ENCODE measurements at regions of chr12 and their contacts with region 1.

Region 1: DNA sequence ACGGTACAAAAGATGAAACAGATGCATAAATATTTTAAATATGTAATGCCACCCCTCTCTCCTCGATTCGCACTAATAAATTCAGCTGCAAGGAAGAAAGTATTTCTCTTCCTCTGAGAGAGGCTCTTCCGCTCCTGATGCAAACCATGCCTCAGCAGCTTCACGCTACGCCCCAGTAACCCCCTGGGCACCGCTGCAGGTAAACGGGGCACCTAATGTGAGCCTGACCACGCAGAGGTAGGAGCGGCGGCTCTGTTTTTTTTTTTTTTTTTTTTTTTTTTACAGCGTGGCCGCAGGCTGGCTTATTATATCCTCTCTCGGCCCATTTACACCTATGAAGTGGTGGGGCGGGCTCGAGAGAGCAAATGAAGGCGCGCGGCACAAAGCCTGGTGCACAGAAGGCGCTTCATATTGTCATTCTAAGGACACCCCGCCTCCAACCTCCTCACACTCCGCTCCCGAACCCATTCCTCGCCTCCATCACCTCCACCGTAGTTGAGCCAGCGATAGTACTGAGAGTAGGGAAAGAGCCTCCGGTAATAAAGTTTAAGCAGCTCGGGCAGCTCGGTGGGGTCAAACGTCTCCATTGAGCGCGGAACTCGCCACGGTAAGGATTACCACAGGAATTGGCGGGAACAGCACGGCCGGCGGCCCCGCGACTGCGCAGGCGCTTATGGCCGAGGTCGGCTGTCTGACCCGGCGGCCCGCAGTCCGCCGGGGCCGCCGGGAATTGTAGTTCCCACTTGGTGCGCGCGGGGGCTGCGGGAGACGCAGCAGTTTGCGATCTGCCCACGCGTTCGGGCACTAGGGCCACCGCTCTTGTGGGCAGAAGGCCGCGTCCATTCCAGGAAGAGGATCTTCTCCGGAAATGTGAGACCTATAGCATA is at the start of gene PRIM1:
- DNase-seq: peak; percentile 52 to 87 (median 74)
- ATAC-seq: peak; percentile 87 to 90 (median 88)
- H3K4me3 ChIP-seq: peak within 1 kb of the TSS; percentile 91 to 92
- H3K4me3 Mint-ChIP-seq: peak within 1 kb of the TSS; percentile 95 to 96 (median 96)
- H3K27ac ChIP-seq: peak within 1 kb of the TSS; percentile 72
- H3K27ac Mint-ChIP-seq: peak within 1 kb of the TSS; percentile 89 to 95
- H3K4me1 ChIP-seq: peaks cover 11 to 16% of the 10 kb centered on the region in 2 experiments
- H3K4me1 Mint-ChIP-seq: peaks cover 32 to 38% (median 38%) of the 10 kb centered on the region in 3 donors
- H3K27me3 ChIP-seq: no peaks in the 10 kb centered on the region
- H3K27me3 Mint-ChIP-seq: no peaks in the 10 kb centered on the region
- total RNA-seq, gene PRIM1: 17.3 to 25.2 (median 22.2) TPM

Region 2: GRCh38 chr12:56616925-56617324 is 135.0 kb before region 1 on chr12:
- CTCF ChIA-PET with region 1: interaction called in 1 of 2 experiments, 10 read pairs
- POLR2A ChIA-PET with region 1: no interaction called
- DNase-seq: no peak
- ATAC-seq: no peak
- H3K4me3 ChIP-seq: no peak overlapping the region
- H3K4me3 Mint-ChIP-seq: no peak overlapping the region
- H3K27ac ChIP-seq: no peak overlapping the region
- H3K27ac Mint-ChIP-seq: peak overlapping the region; percentile 22 to 42
- H3K4me1 ChIP-seq: no peaks in the 10 kb centered on the region
- H3K4me1 Mint-ChIP-seq: peaks cover 27 to 33% (median 32%) of the 10 kb centered on the region in 3 donors
- H3K27me3 ChIP-seq: no peaks in the 10 kb centered on the region
- H3K27me3 Mint-ChIP-seq: no peaks in the 10 kb centered on the region

Region 3: GRCh38 chr12:56803750-56804149 is 51.8 kb after region 1 on chr12:
- CTCF ChIA-PET with region 1: no interaction called
- POLR2A ChIA-PET with region 1: no interaction called
- DNase-seq: no peak
- ATAC-seq: no peak
- H3K4me3 ChIP-seq: no peak overlapping the region
- H3K4me3 Mint-ChIP-seq: no peak overlapping the region
- H3K27ac ChIP-seq: no peak overlapping the region
- H3K27ac Mint-ChIP-seq: no peak overlapping the region
- H3K4me1 ChIP-seq: no peaks in the 10 kb centered on the region
- H3K4me1 Mint-ChIP-seq: no peaks in the 10 kb centered on the region
- H3K27me3 ChIP-seq: peaks cover 0 to 9% of the 10 kb centered on the region in 2 experiments
- H3K27me3 Mint-ChIP-seq: no peaks in the 10 kb centered on the region

Region 4: DNA sequence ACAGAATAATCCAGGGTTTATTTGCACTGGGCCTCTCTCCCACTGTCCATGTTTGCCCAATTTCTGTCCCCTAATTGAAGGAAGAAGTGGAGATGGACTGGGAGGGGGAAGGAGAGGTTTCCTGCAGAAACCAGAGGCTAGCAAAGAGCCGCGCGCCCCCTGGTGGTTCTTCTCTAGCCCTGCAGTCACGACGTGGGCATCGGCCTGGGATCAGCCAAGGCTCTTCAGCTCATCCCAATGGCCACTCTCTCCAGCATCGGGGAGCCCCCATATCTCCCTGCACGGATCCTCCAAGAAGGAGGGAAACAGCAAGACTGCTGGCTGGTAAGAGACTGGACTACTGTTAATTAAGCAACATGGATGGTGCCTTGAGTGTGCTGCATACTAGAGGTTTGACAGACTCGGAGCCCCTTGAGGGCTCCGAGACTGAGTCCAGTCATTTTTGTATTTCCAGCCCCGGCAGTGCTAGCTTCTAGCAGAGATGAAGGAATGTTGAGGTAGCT is 235.6 kb after region 1 on chr12:
- CTCF ChIA-PET with region 1: interaction called, 11 to 13 read pairs
- POLR2A ChIA-PET with region 1: interaction called in 1 of 2 experiments, 3 read pairs
- DNase-seq: peak in 34 of 35 experiments; percentile 41 to 83 (median 66)
- ATAC-seq: peak; percentile 78 to 80 (median 80)
- H3K4me3 ChIP-seq: no peak overlapping the region
- H3K4me3 Mint-ChIP-seq: peak overlapping the region in 1 of 3 donors; percentile 46
- H3K27ac ChIP-seq: no peak overlapping the region
- H3K27ac Mint-ChIP-seq: no peak overlapping the region
- H3K4me1 ChIP-seq: peaks cover 0 to 14% of the 10 kb centered on the region in 2 experiments
- H3K4me1 Mint-ChIP-seq: peaks cover 9 to 15% (median 15%) of the 10 kb centered on the region in 3 donors
- H3K27me3 ChIP-seq: no peaks in the 10 kb centered on the region
- H3K27me3 Mint-ChIP-seq: no peaks in the 10 kb centered on the region

Region 5: GRCh38 chr12:57005980-57006808 is 254.2 kb after region 1 on chr12 and contains the start of gene ZBTB39:
- CTCF ChIA-PET with region 1: interaction called, 8 to 21 read pairs
- POLR2A ChIA-PET with region 1: no interaction called
- DNase-seq: peak; percentile 16 to 85 (median 58)
- ATAC-seq: peak; percentile 81 to 89 (median 88)
- H3K4me3 ChIP-seq: peak within 1 kb of the TSS; percentile 60 to 70
- H3K4me3 Mint-ChIP-seq: peak within 1 kb of the TSS; percentile 92 to 95 (median 93)
- H3K27ac ChIP-seq: peak within 1 kb of the TSS; percentile 60
- H3K27ac Mint-ChIP-seq: peak within 1 kb of the TSS; percentile 95 to 96
- H3K4me1 ChIP-seq: peaks cover 33 to 48% of the 10 kb centered on the region in 2 experiments
- H3K4me1 Mint-ChIP-seq: peaks cover 63 to 86% (median 76%) of the 10 kb centered on the region in 3 donors
- H3K27me3 ChIP-seq: no peaks in the 10 kb centered on the region
- H3K27me3 Mint-ChIP-seq: no peaks in the 10 kb centered on the region
- total RNA-seq, gene ZBTB39: 7.9 to 11.2 (median 11.0) TPM

Region 6: DNA sequence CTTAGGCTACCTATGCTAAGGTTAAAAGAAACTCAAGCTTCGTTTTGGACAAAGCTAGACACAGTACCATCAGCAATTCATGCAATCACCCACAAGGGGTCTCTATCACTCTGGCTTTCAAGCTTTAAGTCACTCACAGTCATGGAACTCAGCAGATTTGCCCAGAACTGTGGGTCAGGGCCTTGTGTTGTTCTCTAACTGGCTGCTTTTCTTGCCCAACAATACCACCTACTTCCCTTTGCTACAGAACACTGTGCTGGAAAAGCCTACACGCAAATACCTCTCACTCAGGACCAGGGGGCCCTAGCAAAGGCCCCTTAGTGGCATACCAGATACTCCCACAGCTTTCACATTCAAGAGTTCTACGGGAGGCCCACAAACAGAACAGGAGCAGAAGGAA is 317.6 kb after region 1 on chr12:
- CTCF ChIA-PET with region 1: interaction called, 3 to 11 read pairs
- POLR2A ChIA-PET with region 1: no interaction called
- DNase-seq: peak in 30 of 35 experiments; percentile 30 to 88 (median 55)
- ATAC-seq: peak; percentile 98 to 100 (median 99)
- H3K4me3 ChIP-seq: no peak overlapping the region
- H3K4me3 Mint-ChIP-seq: peak overlapping the region in 1 of 3 donors; percentile 6
- H3K27ac ChIP-seq: peak overlapping the region; percentile 54
- H3K27ac Mint-ChIP-seq: peak overlapping the region; percentile 85 to 92
- H3K4me1 ChIP-seq: peaks cover 5 to 12% of the 10 kb centered on the region in 2 experiments
- H3K4me1 Mint-ChIP-seq: peaks cover 17 to 31% (median 26%) of the 10 kb centered on the region in 3 donors
- H3K27me3 ChIP-seq: no peaks in the 10 kb centered on the region
- H3K27me3 Mint-ChIP-seq: no peaks in the 10 kb centered on the region

Region 7: DNA sequence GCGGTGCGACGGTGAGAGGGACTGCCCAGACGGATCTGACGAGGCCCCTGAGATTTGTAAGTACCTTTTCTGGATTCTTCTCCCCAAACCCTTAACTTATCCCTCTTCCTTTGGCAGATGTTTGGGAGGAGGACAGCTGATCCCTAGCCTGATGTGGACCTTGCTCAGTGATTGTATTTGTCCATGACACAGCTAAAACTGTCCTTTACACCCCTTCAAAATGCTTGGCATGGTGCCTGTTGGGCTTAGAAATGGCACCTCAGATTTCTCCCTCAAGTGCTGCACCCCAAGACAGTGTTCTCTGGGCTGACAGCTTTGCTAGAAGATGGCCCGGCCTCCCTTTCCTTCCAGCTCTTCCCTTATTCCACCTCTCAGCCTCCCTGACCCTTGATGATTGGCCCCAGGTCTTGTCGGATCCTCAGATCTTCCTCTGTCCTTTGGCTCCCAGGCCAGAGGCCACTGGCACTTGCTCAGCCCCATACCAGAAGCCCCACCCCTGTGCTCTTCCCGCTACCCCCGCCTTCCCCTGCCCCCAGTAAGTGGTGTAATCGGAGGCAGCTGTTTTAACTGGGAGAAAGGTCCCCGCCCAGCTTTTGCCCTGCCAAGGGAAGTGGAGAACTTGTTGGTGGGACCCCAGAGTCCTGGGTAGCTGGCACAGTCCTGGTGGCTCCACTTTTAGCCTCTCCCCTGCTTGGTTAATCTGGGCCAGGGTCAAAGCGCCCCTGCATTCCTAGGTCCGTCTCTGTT is 386.7 kb after region 1 on chr12:
- CTCF ChIA-PET with region 1: interaction called in 1 of 2 experiments, 10 read pairs
- POLR2A ChIA-PET with region 1: no interaction called
- DNase-seq: no peak
- ATAC-seq: no peak
- H3K4me3 ChIP-seq: no peak overlapping the region
- H3K4me3 Mint-ChIP-seq: no peak overlapping the region
- H3K27ac ChIP-seq: no peak overlapping the region
- H3K27ac Mint-ChIP-seq: no peak overlapping the region
- H3K4me1 ChIP-seq: peaks cover 0 to 10% of the 10 kb centered on the region in 2 experiments
- H3K4me1 Mint-ChIP-seq: peaks cover 6 to 8% (median 7%) of the 10 kb centered on the region in 3 donors
- H3K27me3 ChIP-seq: peaks cover 0 to 5% of the 10 kb centered on the region in 2 experiments
- H3K27me3 Mint-ChIP-seq: no peaks in the 10 kb centered on the region